GM12878 (cell line): ENCODE measurements at regions of chr20 and their contacts with region 1.

Region 1: DNA sequence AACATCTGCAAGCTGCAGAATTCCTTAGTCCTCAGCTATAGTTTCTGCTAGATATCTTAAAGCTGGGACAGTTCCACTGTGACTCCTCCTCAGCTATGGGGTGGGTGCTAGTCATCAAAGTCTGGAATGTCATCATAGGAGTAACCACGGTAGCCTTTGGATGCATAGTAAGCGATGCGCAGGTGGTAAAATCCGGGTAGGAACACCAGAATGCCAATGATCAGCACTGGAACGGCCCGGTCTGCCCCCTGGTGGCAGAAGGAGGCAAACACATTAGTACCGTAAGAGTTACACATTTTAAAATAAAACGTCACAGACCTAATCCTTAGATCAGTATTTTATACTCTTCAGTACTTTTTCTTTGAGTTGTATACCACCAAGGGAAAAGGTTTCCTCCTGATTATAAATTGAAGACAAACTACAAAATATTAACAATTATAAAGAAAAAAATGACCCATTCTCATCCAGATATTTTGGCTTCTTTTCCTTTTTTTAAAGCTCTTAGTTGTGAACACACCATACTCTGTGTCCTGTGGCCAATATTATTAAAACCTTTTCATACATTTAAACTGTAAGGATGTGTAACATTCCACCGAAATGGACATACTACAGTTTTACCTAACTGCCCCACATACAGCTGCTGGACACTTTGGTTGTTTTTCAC is 18.9 kb downstream of the PCNA start:
- DNase-seq: no peak
- ATAC-seq: peak; percentile 94
- H3K4me3 ChIP-seq: no peak overlapping the region
- H3K27ac ChIP-seq: no peak overlapping the region
- H3K4me1 ChIP-seq: no peaks in the 10 kb centered on the region
- H3K27me3 ChIP-seq: no peaks in the 10 kb centered on the region
- CTCF ChIP-seq: peak; percentile 72 to 85 (median 81)
- EP300 ChIP-seq: no peak
- POLR2A ChIP-seq: no peak
- RAD21 ChIP-seq: peak; percentile 85

Region 2: DNA sequence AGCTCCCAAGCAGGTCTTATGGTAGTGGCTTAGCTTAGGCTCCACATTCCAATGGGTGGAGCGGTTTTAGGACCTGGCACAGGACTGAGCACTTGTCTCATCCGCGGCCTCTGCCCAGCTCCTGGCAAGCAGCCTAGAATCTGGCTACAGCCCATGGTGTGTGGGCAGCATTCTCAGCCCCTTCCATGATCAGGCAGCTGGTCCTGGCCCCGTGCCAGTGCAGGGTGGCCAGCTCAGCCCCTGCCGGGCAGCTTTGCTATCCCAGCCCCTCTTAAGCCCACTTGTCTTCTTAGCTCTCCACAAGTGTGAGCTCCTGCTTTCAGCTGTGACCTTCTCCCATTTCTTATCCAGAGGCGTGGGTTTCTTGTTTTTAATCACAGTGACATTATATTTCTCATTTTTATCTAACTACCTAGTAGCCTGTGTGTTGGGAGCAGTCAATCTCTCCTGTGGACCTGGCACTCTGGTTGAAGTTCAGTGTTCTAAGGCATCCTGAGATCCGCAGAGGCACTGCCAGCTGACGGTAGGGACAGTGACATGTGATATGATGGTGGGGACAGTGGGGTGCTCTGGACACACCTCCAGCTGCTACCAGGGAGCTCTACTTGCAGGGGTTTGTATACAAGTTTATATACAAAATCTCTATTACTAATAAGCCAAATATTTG is 499.1 kb before region 1 on chr20:
- CTCF ChIA-PET with region 1: interaction called, 6 read pairs
- POLR2A ChIA-PET with region 1: no interaction called
- RAD21 ChIA-PET with region 1: no interaction called
- SMC1A ChIA-PET with region 1: no interaction called
- in situ Hi-C with region 1: loop called (anchors 5 kb)
- intact Hi-C with region 1: loop called (anchors 5 kb)
- DNase-seq: no peak
- ATAC-seq: no peak
- H3K4me3 ChIP-seq: no peak overlapping the region
- H3K27ac ChIP-seq: no peak overlapping the region
- H3K4me1 ChIP-seq: no peaks in the 10 kb centered on the region
- H3K27me3 ChIP-seq: no peaks in the 10 kb centered on the region; a peak in 1 of 4 replicates
- CTCF ChIP-seq: no peak
- EP300 ChIP-seq: no peak
- POLR2A ChIP-seq: no peak
- RAD21 ChIP-seq: no peak

Region 3: DNA sequence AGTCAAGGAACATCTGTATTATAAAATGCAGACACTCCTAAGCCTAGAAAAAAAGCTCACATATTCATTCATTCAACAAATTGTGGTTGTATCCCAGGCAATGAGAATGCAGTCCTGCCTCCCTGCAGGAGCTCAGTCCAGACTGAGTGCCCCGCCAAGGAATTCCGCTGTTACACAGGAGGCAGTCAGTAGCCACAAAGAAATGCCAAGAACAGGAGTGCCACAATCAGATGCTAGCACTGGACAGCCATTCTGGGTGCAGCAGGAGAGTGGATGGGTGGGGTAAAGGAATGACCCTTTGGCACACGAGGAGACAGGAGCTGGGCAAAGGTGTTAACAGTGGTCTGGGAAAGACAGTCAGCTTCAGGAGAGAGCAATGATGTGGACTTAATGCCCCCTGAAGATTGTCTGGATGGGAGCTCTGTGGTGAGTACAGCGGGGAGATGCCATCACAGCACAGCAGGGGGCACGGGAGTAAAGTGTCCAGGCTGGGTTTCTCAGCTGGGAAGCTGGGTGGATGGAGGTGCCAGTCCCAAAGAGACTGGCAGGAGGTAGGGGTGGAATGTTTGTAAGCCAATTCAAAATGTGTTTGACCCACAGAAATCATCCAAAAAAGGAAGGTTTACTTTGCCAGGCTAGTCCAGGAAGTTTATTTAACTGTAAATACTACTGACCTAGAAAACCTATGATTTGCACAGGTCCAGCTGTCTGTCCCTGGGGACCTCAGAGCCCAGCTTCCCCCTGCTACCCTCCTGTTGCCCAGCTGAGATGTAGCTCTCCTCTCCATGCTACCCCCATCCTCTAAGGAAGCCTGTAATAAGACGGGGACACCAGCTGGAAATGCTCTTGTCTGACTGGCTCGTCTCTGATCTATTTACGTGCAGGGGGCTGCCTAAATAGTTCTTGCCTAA is 183.6 kb before region 1 on chr20:
- CTCF ChIA-PET with region 1: interaction called, 19 read pairs
- POLR2A ChIA-PET with region 1: no interaction called
- RAD21 ChIA-PET with region 1: interaction called, 3 read pairs
- SMC1A ChIA-PET with region 1: interaction called, 9 read pairs
- in situ Hi-C with region 1: no loop called
- intact Hi-C with region 1: no loop called
- DNase-seq: no peak
- ATAC-seq: no peak
- H3K4me3 ChIP-seq: no peak overlapping the region
- H3K27ac ChIP-seq: no peak overlapping the region
- H3K4me1 ChIP-seq: no peaks in the 10 kb centered on the region
- H3K27me3 ChIP-seq: no peaks in the 10 kb centered on the region
- CTCF ChIP-seq: no peak
- EP300 ChIP-seq: no peak
- POLR2A ChIP-seq: no peak
- RAD21 ChIP-seq: no peak

Region 4: GRCh38 chr20:4973330-4974097 is 127.3 kb before region 1 on chr20:
- CTCF ChIA-PET with region 1: interaction called, 14 read pairs
- POLR2A ChIA-PET with region 1: no interaction called
- RAD21 ChIA-PET with region 1: interaction called, 16 read pairs
- SMC1A ChIA-PET with region 1: interaction called, 15 read pairs
- in situ Hi-C with region 1: no loop called
- intact Hi-C with region 1: loop called (anchors 5 kb)
- DNase-seq: peak; percentile 85
- ATAC-seq: peak; percentile 94
- H3K4me3 ChIP-seq: peak overlapping the region; percentile 42
- H3K27ac ChIP-seq: peak overlapping the region; percentile 76
- H3K4me1 ChIP-seq: peaks cover 4% of the 10 kb centered on the region
- H3K27me3 ChIP-seq: no peaks in the 10 kb centered on the region
- CTCF ChIP-seq: no peak
- EP300 ChIP-seq: peak; percentile 94 to 97
- POLR2A ChIP-seq: peak; percentile 45; the same call in 1 of the 2 replicates
- RAD21 ChIP-seq: 0 out of 2 replicates have a peak, but pooled peaks have one; percentile 12

Region 5: DNA sequence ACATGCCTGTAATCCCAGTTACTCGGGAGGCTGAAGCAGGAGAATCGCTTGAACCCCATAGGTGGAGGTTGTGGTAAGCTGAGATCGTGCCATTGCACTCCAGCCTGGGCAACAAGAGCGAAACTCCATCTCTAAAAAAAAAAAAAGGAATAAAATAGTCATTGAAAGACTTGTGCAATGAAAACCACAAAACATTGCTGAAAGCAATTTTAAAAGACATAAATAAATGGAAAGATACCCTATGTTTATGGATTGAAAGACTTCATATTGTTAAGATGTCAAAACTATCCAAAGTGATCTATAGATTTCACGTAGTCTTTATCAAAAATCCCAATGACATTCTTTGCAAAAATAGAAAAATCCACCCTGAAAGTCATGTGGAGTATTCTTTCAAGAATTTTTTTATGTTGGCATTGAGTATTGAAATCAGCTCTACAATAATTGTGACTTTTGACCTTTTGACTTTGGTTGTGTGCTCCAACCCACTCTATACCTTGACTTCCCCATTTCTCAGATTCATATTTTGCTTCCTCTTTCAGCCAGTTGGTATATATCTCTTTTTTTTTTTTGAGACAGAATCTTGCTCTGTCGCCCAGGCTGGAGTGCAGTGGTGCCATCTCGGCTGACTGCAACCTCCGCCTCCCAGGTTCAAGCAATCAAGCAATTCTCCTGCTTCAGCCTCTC is 54.0 kb before region 1 on chr20:
- CTCF ChIA-PET with region 1: interaction called, 21 read pairs
- POLR2A ChIA-PET with region 1: no interaction called
- RAD21 ChIA-PET with region 1: interaction called, 9 read pairs
- SMC1A ChIA-PET with region 1: interaction called, 20 read pairs
- in situ Hi-C with region 1: no loop called
- intact Hi-C with region 1: no loop called
- DNase-seq: no peak
- ATAC-seq: peak; percentile 89
- H3K4me3 ChIP-seq: no peak overlapping the region
- H3K27ac ChIP-seq: no peak overlapping the region
- H3K4me1 ChIP-seq: no peaks in the 10 kb centered on the region
- H3K27me3 ChIP-seq: no peaks in the 10 kb centered on the region; a peak in 1 of 4 replicates
- CTCF ChIP-seq: no peak
- EP300 ChIP-seq: no peak
- POLR2A ChIP-seq: no peak
- RAD21 ChIP-seq: no peak

Region 6: GRCh38 chr20:5078399-5078958 is 22.3 kb before region 1 on chr20:
- CTCF ChIA-PET with region 1: interaction called, 40 read pairs
- POLR2A ChIA-PET with region 1: no interaction called
- RAD21 ChIA-PET with region 1: interaction called, 26 read pairs
- SMC1A ChIA-PET with region 1: interaction called, 45 read pairs
- in situ Hi-C with region 1: no loop called
- intact Hi-C with region 1: no loop called
- DNase-seq: peak; percentile 98
- ATAC-seq: peak; percentile 81
- H3K4me3 ChIP-seq: no peak overlapping the region; the same call in 1 of the 2 replicates
- H3K27ac ChIP-seq: peak overlapping the region; percentile 68
- H3K4me1 ChIP-seq: peaks cover 47% of the 10 kb centered on the region
- H3K27me3 ChIP-seq: no peaks in the 10 kb centered on the region; a peak in 1 of 4 replicates
- CTCF ChIP-seq: no peak
- EP300 ChIP-seq: peak; percentile 93 to 98
- POLR2A ChIP-seq: peak; percentile 51
- RAD21 ChIP-seq: no peak

Region 7: GRCh38 chr20:5215672-5216304 is 115.0 kb after region 1 on chr20:
- CTCF ChIA-PET with region 1: no interaction called
- POLR2A ChIA-PET with region 1: no interaction called
- RAD21 ChIA-PET with region 1: no interaction called
- SMC1A ChIA-PET with region 1: no interaction called
- in situ Hi-C with region 1: no loop called
- intact Hi-C with region 1: no loop called
- DNase-seq: no peak
- ATAC-seq: no peak
- H3K4me3 ChIP-seq: no peak overlapping the region
- H3K27ac ChIP-seq: no peak overlapping the region
- H3K4me1 ChIP-seq: no peaks in the 10 kb centered on the region
- H3K27me3 ChIP-seq: no peaks in the 10 kb centered on the region
- CTCF ChIP-seq: no peak
- EP300 ChIP-seq: no peak
- POLR2A ChIP-seq: no peak
- RAD21 ChIP-seq: no peak

Region 8: DNA sequence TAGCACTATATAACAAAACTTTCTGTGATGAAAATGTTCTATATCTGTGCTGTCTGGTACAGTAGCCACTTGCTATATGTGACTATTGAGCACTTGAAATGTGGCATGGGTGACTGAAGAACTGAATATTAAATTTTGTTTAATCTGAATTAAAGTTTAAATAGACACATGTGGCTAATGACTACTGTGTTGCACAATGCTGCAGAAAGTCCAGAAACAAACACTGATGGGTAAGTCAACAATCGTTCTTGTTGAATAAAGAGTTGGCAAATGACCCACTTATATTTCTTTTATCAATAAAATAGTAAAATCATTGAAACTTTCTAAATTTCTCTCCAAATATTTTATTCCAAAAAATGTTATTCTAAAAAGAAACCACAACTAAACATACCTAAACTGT is 134.2 kb after region 1 on chr20:
- CTCF ChIA-PET with region 1: no interaction called
- POLR2A ChIA-PET with region 1: no interaction called
- RAD21 ChIA-PET with region 1: no interaction called
- SMC1A ChIA-PET with region 1: no interaction called
- in situ Hi-C with region 1: no loop called
- intact Hi-C with region 1: no loop called
- DNase-seq: no peak
- ATAC-seq: no peak
- H3K4me3 ChIP-seq: no peak overlapping the region
- H3K27ac ChIP-seq: no peak overlapping the region
- H3K4me1 ChIP-seq: no peaks in the 10 kb centered on the region
- H3K27me3 ChIP-seq: no peaks in the 10 kb centered on the region
- CTCF ChIP-seq: no peak
- EP300 ChIP-seq: no peak
- POLR2A ChIP-seq: no peak
- RAD21 ChIP-seq: no peak

Region 9: DNA sequence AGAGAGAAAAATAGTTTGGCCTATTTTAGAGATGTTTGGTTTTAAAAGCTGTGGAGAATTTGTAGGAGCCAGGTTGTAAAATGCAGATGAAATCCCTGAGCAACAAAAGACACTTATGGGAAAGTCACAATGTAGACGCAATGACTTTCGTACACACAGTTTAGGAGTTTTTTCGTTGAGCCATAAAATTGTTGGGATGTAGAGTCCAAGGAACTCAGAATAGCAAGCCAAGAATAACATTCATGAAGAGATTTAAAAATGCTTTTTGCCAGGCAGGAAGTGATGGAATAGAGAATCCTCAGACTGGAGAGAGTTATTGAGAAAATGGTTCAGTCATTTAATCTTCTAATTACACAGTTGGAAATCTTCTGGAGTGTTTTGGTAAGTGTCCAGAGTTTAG is 227.5 kb after region 1 on chr20:
- CTCF ChIA-PET with region 1: no interaction called
- POLR2A ChIA-PET with region 1: no interaction called
- RAD21 ChIA-PET with region 1: no interaction called
- SMC1A ChIA-PET with region 1: no interaction called
- in situ Hi-C with region 1: no loop called
- intact Hi-C with region 1: no loop called
- DNase-seq: no peak
- ATAC-seq: no peak
- H3K4me3 ChIP-seq: no peak overlapping the region
- H3K27ac ChIP-seq: no peak overlapping the region
- H3K4me1 ChIP-seq: no peaks in the 10 kb centered on the region
- H3K27me3 ChIP-seq: no peaks in the 10 kb centered on the region
- CTCF ChIP-seq: no peak
- EP300 ChIP-seq: no peak
- POLR2A ChIP-seq: no peak
- RAD21 ChIP-seq: no peak